IMR-90 (cell line): ENCODE measurements at regions of chr5 and their contacts with region 1.

Region 1: GRCh38 chr5:39501397-39501796 is 76.6 kb upstream of the DAB2 start:
- DNase-seq: peak; percentile 90
- ATAC-seq: peak; percentile 80
- H3K4me3 ChIP-seq: no peak overlapping the region
- H3K27ac ChIP-seq: peak overlapping the region; percentile 75; the same call in 1 of the 2 replicates
- H3K4me1 ChIP-seq: peaks cover 21% of the 10 kb centered on the region
- H3K27me3 ChIP-seq: no peaks in the 10 kb centered on the region
- CTCF ChIP-seq: no peak
- POLR2A ChIP-seq: no peak
- RAD21 ChIP-seq: no peak

Region 2: GRCh38 chr5:39475881-39476842 is 25.2 kb before region 1 on chr5:
- CTCF ChIA-PET with region 1: no interaction called
- POLR2A ChIA-PET with region 1: interaction called, 3 read pairs
- dilution Hi-C with region 1: no loop called
- in situ Hi-C with region 1: no loop called
- intact Hi-C with region 1: loop called (anchors 2 kb)
- DNase-seq: peak; percentile 86
- ATAC-seq: peak; percentile 42
- H3K4me3 ChIP-seq: no peak overlapping the region
- H3K27ac ChIP-seq: peak overlapping the region; percentile 87; the same call in 1 of the 2 replicates
- H3K4me1 ChIP-seq: peaks cover 11% of the 10 kb centered on the region
- H3K27me3 ChIP-seq: no peaks in the 10 kb centered on the region
- CTCF ChIP-seq: no peak; the same call in 1 of the 2 replicates
- POLR2A ChIP-seq: no peak
- RAD21 ChIP-seq: no peak

Region 3: GRCh38 chr5:39520232-39520572 is 18.8 kb after region 1 on chr5:
- CTCF ChIA-PET with region 1: no interaction called
- POLR2A ChIA-PET with region 1: no interaction called
- dilution Hi-C with region 1: no loop called
- in situ Hi-C with region 1: no loop called
- intact Hi-C with region 1: loop called (anchors 2 kb)
- DNase-seq: peak; percentile 95
- ATAC-seq: peak; percentile 22
- H3K4me3 ChIP-seq: no peak overlapping the region
- H3K27ac ChIP-seq: peak overlapping the region; percentile 83; the same call in 1 of the 2 replicates
- H3K4me1 ChIP-seq: peaks cover 14% of the 10 kb centered on the region
- H3K27me3 ChIP-seq: no peaks in the 10 kb centered on the region
- CTCF ChIP-seq: no peak
- POLR2A ChIP-seq: no peak
- RAD21 ChIP-seq: no peak

Region 4: GRCh38 chr5:39584927-39585326 is 83.5 kb after region 1 on chr5:
- CTCF ChIA-PET with region 1: no interaction called
- POLR2A ChIA-PET with region 1: no interaction called
- dilution Hi-C with region 1: no loop called
- in situ Hi-C with region 1: no loop called
- intact Hi-C with region 1: no loop called
- DNase-seq: peak; percentile 21
- ATAC-seq: peak; percentile 48; the same call in 1 of the 2 replicates
- H3K4me3 ChIP-seq: no peak overlapping the region
- H3K27ac ChIP-seq: no peak overlapping the region
- H3K4me1 ChIP-seq: no peaks in the 10 kb centered on the region
- H3K27me3 ChIP-seq: peaks cover 22% of the 10 kb centered on the region
- CTCF ChIP-seq: no peak
- POLR2A ChIP-seq: no peak
- RAD21 ChIP-seq: no peak